ENCODE measurements at regions of chr2 and their contacts with region 1.

Region 1: DNA sequence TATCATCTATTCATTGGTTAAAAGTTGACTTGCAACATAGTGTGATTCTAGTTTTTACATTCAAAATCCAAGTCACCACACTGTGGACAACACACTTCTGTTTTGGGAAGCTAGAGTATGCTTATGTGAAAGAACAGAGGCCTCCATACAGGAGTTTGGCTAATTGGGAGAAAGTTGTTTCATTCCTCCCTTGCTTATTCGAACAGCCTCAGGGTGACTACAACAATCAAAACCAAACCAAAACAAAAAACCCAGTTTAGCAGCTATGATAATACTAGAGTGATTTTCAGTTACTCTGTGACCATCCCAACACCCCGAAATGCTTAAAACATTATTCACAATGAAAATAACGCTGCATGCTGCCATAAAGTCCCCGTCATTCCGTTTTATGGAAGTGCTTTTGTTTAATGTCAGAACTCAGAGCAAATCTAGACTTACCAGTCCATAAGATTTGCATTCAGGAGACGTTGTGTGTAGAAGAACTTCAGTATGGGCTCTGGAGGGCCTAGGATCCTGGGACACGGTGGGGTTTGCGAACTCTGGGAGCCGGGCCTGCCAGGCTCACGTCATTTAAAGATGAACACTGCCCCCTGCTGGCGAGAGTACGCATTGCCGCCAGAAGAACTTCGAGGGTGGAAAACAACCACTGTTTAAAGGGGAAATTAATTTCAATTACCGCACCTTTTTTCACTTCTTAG is 111.4 kb downstream of the FTCDNL1 start:
- DNase-seq: peak; percentile 45 to 93
- H3K4me3 ChIP-seq: no peak overlapping the region
- CTCF ChIP-seq: peak in 1 of 3 donors; percentile 71
- POLR2A ChIP-seq: no peak

Region 2: DNA sequence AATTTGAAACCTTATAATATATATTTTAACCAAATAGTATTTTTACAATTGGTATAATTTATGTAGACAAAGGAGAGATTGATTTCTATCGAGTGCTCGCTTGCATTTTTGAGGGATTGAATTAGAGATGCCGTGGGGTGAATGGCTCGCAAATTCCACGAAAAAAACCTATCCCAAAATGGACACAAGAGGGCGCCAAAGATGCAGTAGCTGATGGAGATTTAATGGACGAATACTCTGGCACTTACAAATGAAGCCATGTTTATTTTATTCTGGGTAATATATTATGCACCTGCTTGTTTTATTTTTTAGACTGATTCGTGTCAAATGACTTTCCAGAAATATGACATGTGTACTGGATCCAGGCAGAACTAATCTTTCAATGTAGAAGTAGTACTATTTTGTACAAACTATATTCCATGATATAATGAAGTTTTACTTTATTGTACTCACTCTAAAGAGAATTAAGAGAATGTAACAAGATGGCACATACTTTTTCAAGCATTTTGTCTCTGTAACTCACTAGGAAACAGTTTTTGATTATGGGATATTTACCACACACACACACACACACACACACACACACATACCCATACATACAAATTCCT is 1429.8 kb before region 1 on chr2:
- intact Hi-C with region 1: loop called (anchors 10 kb)
- DNase-seq: peak in 1 of 2 donors; percentile 21
- H3K4me3 ChIP-seq: no peak overlapping the region
- CTCF ChIP-seq: no peak
- POLR2A ChIP-seq: no peak